CD8-positive, alpha-beta T cell (primary cell): ENCODE measurements at regions of chr1 and their contacts with region 1.

Region 1: GRCh38 chr1:53278201-53278725 is 39.9 kb upstream of the MAGOH start:
- DNase-seq: peak; percentile 51 to 86 (median 66)
- ATAC-seq: peak; percentile 81
- H3K4me3 ChIP-seq: no peak overlapping the region
- H3K4me3 Mint-ChIP-seq: no peak overlapping the region
- H3K27ac ChIP-seq: no peak overlapping the region
- H3K27ac Mint-ChIP-seq: no peak overlapping the region
- H3K4me1 ChIP-seq: no peaks in the 10 kb centered on the region
- H3K4me1 Mint-ChIP-seq: peaks cover 2% of the 10 kb centered on the region
- H3K27me3 ChIP-seq: no peaks in the 10 kb centered on the region
- H3K27me3 Mint-ChIP-seq: no peaks in the 10 kb centered on the region
- CTCF ChIP-seq: peak; percentile 94

Region 2: DNA sequence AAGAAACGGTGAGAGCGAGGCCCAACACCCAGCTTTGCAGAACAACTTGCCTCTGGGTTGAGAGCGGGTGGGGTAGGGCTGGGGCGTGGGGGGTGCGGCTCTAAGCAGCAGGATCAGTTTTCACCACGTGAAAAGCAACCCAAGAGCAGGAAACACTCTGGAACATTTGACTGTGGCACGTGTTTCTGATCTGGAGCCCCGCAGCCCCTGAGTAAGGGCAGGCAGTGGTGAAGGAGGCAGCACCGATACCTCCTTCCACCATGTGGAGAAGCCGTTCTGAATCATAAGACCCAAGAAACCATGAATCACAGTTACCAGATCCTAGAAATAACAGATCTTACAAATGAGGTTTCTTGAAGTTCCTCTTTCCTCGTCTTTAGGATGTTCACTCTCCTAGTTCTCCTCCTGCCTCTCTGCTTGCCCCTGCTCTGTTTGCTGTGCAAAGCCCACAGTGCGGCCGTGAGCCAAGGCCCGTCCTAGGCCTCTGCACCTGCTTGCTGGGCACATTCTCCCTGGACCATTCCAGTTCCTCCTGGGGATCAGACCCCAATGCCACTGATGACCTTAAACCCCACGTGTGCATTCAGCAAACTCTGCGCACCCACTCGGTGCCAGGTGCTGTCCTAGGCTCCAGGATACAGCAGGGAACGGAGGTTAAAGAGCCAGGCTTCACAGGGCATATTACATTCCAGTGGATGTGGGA is 167.7 kb before region 1 on chr1:
- CTCF ChIA-PET with region 1: no interaction called
- POLR2A ChIA-PET with region 1: no interaction called
- intact Hi-C with region 1: no loop called
- DNase-seq: no peak
- ATAC-seq: no peak
- H3K4me3 ChIP-seq: no peak overlapping the region
- H3K4me3 Mint-ChIP-seq: no peak overlapping the region
- H3K27ac ChIP-seq: no peak overlapping the region
- H3K27ac Mint-ChIP-seq: no peak overlapping the region
- H3K4me1 ChIP-seq: peaks cover 6% of the 10 kb centered on the region
- H3K4me1 Mint-ChIP-seq: peaks cover 18% of the 10 kb centered on the region
- H3K27me3 ChIP-seq: no peaks in the 10 kb centered on the region
- H3K27me3 Mint-ChIP-seq: peaks cover 2% of the 10 kb centered on the region
- CTCF ChIP-seq: no peak

Region 3: DNA sequence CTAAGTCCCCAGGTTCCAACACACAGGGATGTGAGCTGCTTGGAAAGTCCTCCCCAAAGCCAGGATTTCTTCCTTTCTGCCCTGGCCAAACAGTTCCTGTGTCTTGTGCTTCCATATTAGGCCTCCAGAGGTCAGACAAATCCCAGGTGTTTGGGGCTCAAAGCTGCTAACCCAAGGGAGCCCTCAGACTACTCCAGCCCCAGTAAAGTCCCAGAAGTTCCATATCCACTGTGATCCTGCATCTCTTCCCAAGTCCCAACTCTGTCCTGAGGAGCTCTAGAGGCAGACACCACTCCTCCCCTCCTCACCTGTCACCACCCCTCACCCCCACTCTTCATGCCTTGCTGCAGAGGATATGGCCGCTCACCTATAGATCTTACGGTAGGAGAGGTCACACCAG is 12.2 kb before region 1 on chr1:
- CTCF ChIA-PET with region 1: interaction called, 32 read pairs
- POLR2A ChIA-PET with region 1: no interaction called
- intact Hi-C with region 1: no loop called
- DNase-seq: no peak
- ATAC-seq: no peak
- H3K4me3 ChIP-seq: no peak overlapping the region
- H3K4me3 Mint-ChIP-seq: no peak overlapping the region
- H3K27ac ChIP-seq: no peak overlapping the region
- H3K27ac Mint-ChIP-seq: no peak overlapping the region
- H3K4me1 ChIP-seq: no peaks in the 10 kb centered on the region
- H3K4me1 Mint-ChIP-seq: no peaks in the 10 kb centered on the region
- H3K27me3 ChIP-seq: no peaks in the 10 kb centered on the region
- H3K27me3 Mint-ChIP-seq: no peaks in the 10 kb centered on the region
- CTCF ChIP-seq: no peak

Region 4: DNA sequence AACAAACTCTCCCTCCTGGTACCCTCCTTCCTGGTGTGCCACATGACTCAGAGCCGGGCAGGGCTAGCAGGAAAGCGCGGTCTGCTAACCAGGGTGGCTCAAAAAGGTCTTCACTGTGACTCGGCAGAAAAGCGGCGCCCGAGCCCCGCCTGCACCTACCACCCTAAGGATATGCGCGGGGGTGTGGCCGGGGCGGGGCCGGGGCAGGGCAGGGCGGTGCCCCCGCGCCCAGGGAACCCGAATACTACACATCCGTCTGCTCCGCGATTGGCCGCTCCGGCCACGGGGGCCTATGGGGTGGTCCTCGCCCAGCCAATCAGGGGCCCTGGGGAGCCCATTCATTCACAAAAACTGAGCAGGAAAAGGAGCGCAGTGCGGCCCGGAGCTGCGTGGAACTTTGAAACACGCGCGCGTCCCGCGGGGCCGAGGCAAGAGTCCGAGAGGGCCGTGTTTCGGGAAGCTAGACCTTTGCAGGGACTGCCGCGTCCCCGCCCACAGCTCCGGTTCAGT is 47.9 kb after region 1 on chr1:
- CTCF ChIA-PET with region 1: interaction called, 14 read pairs
- POLR2A ChIA-PET with region 1: no interaction called
- intact Hi-C with region 1: loop called in 1 of 2 experiments (anchors 1 kb)
- DNase-seq: peak; percentile 78 to 94 (median 92)
- ATAC-seq: peak; percentile 89
- H3K4me3 ChIP-seq: peak overlapping the region; percentile 74 to 82
- H3K4me3 Mint-ChIP-seq: peak overlapping the region; percentile 94
- H3K27ac ChIP-seq: peak overlapping the region; percentile 26 to 66
- H3K27ac Mint-ChIP-seq: peak overlapping the region; percentile 77
- H3K4me1 ChIP-seq: peaks cover 6% of the 10 kb centered on the region
- H3K4me1 Mint-ChIP-seq: peaks cover 16% of the 10 kb centered on the region
- H3K27me3 ChIP-seq: no peaks in the 10 kb centered on the region
- H3K27me3 Mint-ChIP-seq: no peaks in the 10 kb centered on the region
- CTCF ChIP-seq: no peak

Region 5: GRCh38 chr1:53393325-53393792 is 115.1 kb after region 1 on chr1:
- CTCF ChIA-PET with region 1: interaction called, 458 read pairs
- POLR2A ChIA-PET with region 1: interaction called, 4 read pairs
- intact Hi-C with region 1: loop called in 1 of 2 experiments (anchors 1 kb)
- DNase-seq: peak; percentile 48 to 88 (median 71)
- ATAC-seq: peak; percentile 57
- H3K4me3 ChIP-seq: no peak overlapping the region
- H3K4me3 Mint-ChIP-seq: no peak overlapping the region
- H3K27ac ChIP-seq: no peak overlapping the region
- H3K27ac Mint-ChIP-seq: no peak overlapping the region
- H3K4me1 ChIP-seq: no peaks in the 10 kb centered on the region
- H3K4me1 Mint-ChIP-seq: no peaks in the 10 kb centered on the region
- H3K27me3 ChIP-seq: no peaks in the 10 kb centered on the region
- H3K27me3 Mint-ChIP-seq: no peaks in the 10 kb centered on the region
- CTCF ChIP-seq: peak; percentile 95

Region 6: GRCh38 chr1:53485478-53486394 is 207.5 kb after region 1 on chr1:
- CTCF ChIA-PET with region 1: interaction called, 12 read pairs
- POLR2A ChIA-PET with region 1: no interaction called
- intact Hi-C with region 1: no loop called
- DNase-seq: peak; percentile 38 to 79 (median 67)
- ATAC-seq: peak; percentile 44
- H3K4me3 ChIP-seq: no peak overlapping the region
- H3K4me3 Mint-ChIP-seq: no peak overlapping the region
- H3K27ac ChIP-seq: no peak overlapping the region
- H3K27ac Mint-ChIP-seq: no peak overlapping the region
- H3K4me1 ChIP-seq: no peaks in the 10 kb centered on the region
- H3K4me1 Mint-ChIP-seq: peaks cover 5% of the 10 kb centered on the region
- H3K27me3 ChIP-seq: peaks cover 2 to 6% of the 10 kb centered on the region in 2 experiments
- H3K27me3 Mint-ChIP-seq: peaks cover 21% of the 10 kb centered on the region
- CTCF ChIP-seq: peak; percentile 62